ENCODE measurements at regions of chr3 and their contacts with region 1.

Region 1: GRCh38 chr3:119542168-119542767 is 17.1 kb downstream of the CD80 start:
- DNase-seq: no peak
- ATAC-seq: peak; percentile 26
- H3K4me3 ChIP-seq: 0 out of 2 replicates have a peak overlapping the region, but pooled peaks have one; percentile 17
- H3K27ac ChIP-seq: peak overlapping the region; percentile 55
- H3K4me1 ChIP-seq: peaks cover 16% of the 10 kb centered on the region
- H3K27me3 ChIP-seq: no peaks in the 10 kb centered on the region
- CTCF ChIP-seq: no peak
- EP300 ChIP-seq: no peak
- POLR2A ChIP-seq: no peak
- RAD21 ChIP-seq: no peak

Region 2: DNA sequence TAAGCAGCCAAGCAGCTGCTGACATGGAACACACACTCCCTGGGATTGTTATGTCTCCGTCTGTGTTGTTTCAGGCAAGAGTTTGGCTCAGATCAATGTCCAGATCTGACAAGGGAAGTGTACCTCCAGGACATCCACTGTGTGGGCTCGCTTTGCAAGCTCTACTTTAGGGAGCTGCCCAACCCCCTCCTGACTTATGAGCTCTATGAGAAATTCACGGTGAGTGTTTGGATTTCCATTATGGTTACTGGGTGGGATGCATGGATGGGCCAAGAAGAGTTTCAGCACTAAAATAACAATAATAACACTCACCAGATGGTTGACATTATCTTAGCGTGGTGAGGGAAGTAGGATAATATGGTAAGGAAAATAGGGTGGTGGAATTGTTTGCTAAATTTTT is 174.0 kb before region 1 on chr3:
- CTCF ChIA-PET with region 1: no interaction called
- POLR2A ChIA-PET with region 1: no interaction called
- RAD21 ChIA-PET with region 1: no interaction called
- SMC1A ChIA-PET with region 1: no interaction called
- in situ Hi-C with region 1: no loop called
- intact Hi-C with region 1: no loop called
- DNase-seq: no peak
- ATAC-seq: no peak
- H3K4me3 ChIP-seq: no peak overlapping the region
- H3K27ac ChIP-seq: no peak overlapping the region
- H3K4me1 ChIP-seq: no peaks in the 10 kb centered on the region
- H3K27me3 ChIP-seq: no peaks in the 10 kb centered on the region
- CTCF ChIP-seq: no peak
- EP300 ChIP-seq: no peak
- POLR2A ChIP-seq: no peak
- RAD21 ChIP-seq: no peak

Region 3: DNA sequence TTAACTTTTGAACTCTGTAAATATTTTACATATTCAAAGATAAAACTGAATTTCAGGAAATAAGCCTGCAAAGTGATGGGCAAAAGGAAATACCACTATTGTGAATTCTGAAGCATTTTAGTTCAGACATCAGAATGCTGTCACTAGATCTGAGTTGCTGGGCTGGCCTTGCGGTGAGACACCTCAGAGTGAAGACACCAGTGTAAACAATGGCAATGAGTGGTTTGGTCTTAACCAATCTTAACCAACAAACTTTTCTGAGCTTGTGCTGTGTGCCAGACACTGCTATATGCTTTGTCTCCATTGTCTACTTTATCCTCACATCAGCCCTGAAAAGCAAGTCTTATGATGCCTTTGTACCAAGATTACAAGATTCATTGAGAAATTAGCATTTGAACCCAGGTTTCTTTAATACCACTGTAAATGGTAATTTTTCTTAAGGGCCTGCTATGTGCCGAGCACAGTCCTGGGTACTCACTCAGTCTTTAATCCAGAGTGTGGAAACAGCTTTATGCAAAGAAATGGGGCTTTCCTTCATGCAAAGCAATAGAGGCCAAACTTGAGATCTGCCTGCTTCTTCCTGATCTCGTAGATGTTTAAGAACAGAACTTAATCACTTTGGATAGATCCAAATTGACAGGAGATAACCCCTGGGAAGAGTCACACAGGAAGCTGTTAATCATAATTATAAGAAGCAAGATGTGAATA is 133.9 kb before region 1 on chr3:
- CTCF ChIA-PET with region 1: no interaction called
- POLR2A ChIA-PET with region 1: no interaction called
- RAD21 ChIA-PET with region 1: no interaction called
- SMC1A ChIA-PET with region 1: no interaction called
- in situ Hi-C with region 1: no loop called
- intact Hi-C with region 1: no loop called
- DNase-seq: peak; percentile 12
- ATAC-seq: peak; percentile 71
- H3K4me3 ChIP-seq: no peak overlapping the region
- H3K27ac ChIP-seq: peak overlapping the region; percentile 27
- H3K4me1 ChIP-seq: peaks cover 6% of the 10 kb centered on the region; the same call in 1 of the 2 replicates
- H3K27me3 ChIP-seq: no peaks in the 10 kb centered on the region
- CTCF ChIP-seq: no peak
- EP300 ChIP-seq: no peak
- POLR2A ChIP-seq: no peak
- RAD21 ChIP-seq: no peak

Region 4: DNA sequence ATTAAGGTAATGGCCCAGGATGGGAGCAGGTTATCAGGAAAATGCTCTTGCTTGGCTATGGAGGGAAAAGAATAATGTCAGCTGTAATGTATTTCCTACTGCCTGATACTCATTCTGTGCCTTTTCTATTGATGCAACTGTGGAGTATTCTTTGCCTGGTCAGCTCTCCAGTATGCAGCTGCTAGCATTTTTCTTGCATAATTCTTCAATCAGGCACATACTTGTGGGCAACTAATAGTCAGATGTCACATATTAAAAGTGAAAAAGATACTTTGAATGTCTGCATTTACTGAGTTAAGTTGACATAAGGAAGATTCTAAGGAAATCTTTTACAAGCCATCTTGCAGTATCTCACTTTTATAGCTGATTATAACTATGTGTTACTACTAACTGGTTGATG is 12.4 kb before region 1 on chr3:
- CTCF ChIA-PET with region 1: interaction called, 6 read pairs
- POLR2A ChIA-PET with region 1: interaction called, 3 read pairs
- RAD21 ChIA-PET with region 1: no interaction called
- SMC1A ChIA-PET with region 1: interaction called, 10 read pairs
- in situ Hi-C with region 1: no loop called
- intact Hi-C with region 1: no loop called
- DNase-seq: no peak
- ATAC-seq: no peak
- H3K4me3 ChIP-seq: no peak overlapping the region
- H3K27ac ChIP-seq: no peak overlapping the region
- H3K4me1 ChIP-seq: no peaks in the 10 kb centered on the region
- H3K27me3 ChIP-seq: no peaks in the 10 kb centered on the region
- CTCF ChIP-seq: no peak
- EP300 ChIP-seq: no peak
- POLR2A ChIP-seq: no peak
- RAD21 ChIP-seq: no peak

Measured in GM12878 (cell line).